ENCODE measurements at regions of chr1 and their contacts with region 1.

Region 1: DNA sequence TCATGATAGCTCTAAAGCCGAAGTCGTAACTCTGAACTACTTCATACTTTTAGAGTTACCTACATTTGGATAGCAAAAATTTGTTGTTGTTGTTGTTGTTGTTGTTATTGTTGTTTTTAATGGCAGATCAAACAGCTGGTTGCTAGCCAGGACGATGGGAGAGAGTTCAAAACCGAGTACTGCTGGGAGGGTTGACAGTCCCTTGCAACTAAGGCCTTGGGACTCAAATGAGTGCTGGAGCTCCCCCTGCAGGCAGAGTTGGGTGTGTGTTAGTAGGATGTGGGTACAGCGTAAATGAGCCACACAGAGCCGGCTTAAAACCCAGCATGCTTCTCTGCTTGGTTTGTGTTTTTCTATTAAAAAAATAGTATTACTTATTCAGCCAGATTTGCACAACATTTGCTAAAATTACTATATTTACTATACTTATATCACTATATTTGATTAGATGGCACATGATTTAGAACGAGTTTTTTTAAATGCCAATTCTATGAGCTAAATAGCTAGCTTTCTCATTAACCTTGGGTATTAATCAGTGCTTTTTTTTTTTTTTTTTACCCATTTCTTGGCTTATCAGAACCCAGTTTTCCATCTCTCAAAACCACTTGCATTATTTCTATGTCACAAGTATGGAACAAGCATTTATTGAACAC is 129.2 kb upstream of the SYT6 start:
- DNase-seq: peak; percentile 96
- H3K4me3 ChIP-seq: no peak overlapping the region
- H3K27ac ChIP-seq: peak overlapping the region; percentile 16
- H3K4me1 ChIP-seq: peaks cover 34% of the 10 kb centered on the region
- H3K27me3 ChIP-seq: no peaks in the 10 kb centered on the region
- CTCF ChIP-seq: peak; percentile 94

Region 2: GRCh38 chr1:114145504-114146151 is 137.2 kb before region 1 on chr1:
- CTCF ChIA-PET with region 1: no interaction called
- POLR2A ChIA-PET with region 1: no interaction called
- intact Hi-C with region 1: loop called (anchors 10 kb)
- DNase-seq: no peak
- H3K4me3 ChIP-seq: no peak overlapping the region
- H3K27ac ChIP-seq: no peak overlapping the region
- H3K4me1 ChIP-seq: peaks cover 21% of the 10 kb centered on the region
- H3K27me3 ChIP-seq: no peaks in the 10 kb centered on the region
- CTCF ChIP-seq: no peak

Region 3: GRCh38 chr1:114196618-114197502 is 86.0 kb before region 1 on chr1:
- CTCF ChIA-PET with region 1: interaction called, 8 read pairs
- POLR2A ChIA-PET with region 1: interaction called, 3 read pairs
- intact Hi-C with region 1: loop called (anchors 2 kb)
- DNase-seq: peak; percentile 96
- H3K4me3 ChIP-seq: no peak overlapping the region
- H3K27ac ChIP-seq: peak overlapping the region; percentile 99
- H3K4me1 ChIP-seq: peaks cover 63% of the 10 kb centered on the region
- H3K27me3 ChIP-seq: no peaks in the 10 kb centered on the region
- CTCF ChIP-seq: no peak

Region 4: DNA sequence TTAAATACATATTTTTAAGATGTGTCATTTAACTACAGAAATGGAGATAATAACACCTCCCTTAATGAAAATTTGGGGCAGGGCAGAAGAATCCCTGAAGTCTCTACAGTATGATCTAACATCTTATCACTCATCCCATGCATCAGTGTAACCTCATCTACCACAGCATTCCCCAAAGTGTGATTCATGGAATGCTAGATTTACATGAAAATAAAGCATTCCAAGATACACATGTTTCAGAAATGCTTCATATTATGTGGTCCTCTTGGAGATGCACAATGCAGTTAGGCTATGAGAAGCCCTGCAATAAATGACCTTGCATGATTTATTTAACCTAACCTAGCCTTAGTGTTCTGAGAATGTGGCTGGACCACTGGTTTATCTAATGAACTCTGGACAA is 37.7 kb after region 1 on chr1:
- CTCF ChIA-PET with region 1: interaction called, 12 read pairs
- POLR2A ChIA-PET with region 1: interaction called, 3 read pairs
- intact Hi-C with region 1: no loop called
- DNase-seq: no peak
- H3K4me3 ChIP-seq: no peak overlapping the region
- H3K27ac ChIP-seq: no peak overlapping the region
- H3K4me1 ChIP-seq: no peaks in the 10 kb centered on the region
- H3K27me3 ChIP-seq: no peaks in the 10 kb centered on the region
- CTCF ChIP-seq: no peak

Measured in A673 (cell line).